Ascending aorta (tissue), 2 donors: ENCODE measurements at regions of chr19 and their contacts with region 1.

Region 1: DNA sequence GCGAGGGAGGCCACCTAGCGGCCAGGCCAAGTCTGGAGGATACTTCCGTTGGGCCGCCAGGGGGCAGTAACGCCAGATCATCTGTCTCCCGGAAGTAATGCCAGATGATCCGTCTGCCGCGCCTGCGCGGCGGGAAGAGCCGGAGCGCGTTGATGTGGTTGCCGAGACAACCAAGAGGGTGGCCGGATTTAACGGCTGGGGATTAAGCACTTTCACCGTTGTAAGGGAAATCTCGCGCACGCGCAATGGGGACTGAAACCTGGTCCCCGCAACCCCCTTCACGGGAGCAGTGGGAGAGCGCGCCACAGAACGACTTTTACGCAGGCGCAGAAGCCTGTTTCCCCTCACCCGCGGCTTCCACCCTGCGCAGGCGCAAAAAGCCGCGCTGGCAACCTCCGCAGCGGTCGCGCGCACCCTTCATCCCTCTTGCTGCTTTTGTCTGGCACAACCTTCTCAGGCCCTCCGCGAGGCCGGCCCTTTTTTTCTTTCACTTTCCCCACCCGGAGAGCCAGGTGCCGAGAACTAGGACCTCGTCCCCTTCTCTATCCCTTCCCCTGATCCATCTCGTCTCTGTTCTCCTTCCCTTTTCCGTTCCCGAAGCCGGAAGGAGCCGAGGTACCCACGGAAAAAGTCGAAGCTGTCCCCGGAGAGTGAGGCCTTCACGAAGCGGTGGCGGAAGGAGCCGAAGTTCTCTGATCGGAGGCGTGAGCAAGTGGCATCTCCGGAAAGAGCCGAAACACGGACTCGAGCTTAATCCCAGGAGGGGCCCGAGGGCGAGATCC is 886 bp upstream of the U2AF2 start:
- DNase-seq: peak; percentile 98 to 100
- H3K4me3 ChIP-seq: peak overlapping the region; percentile 77 to 89
- H3K27ac ChIP-seq: peak overlapping the region; percentile 97
- H3K4me1 ChIP-seq: peaks cover 20 to 36% of the 10 kb centered on the region in 2 donors
- H3K27me3 ChIP-seq: no peaks in the 10 kb centered on the region
- CTCF ChIP-seq: peak; percentile 94 to 100 (median 96)

Region 2: DNA sequence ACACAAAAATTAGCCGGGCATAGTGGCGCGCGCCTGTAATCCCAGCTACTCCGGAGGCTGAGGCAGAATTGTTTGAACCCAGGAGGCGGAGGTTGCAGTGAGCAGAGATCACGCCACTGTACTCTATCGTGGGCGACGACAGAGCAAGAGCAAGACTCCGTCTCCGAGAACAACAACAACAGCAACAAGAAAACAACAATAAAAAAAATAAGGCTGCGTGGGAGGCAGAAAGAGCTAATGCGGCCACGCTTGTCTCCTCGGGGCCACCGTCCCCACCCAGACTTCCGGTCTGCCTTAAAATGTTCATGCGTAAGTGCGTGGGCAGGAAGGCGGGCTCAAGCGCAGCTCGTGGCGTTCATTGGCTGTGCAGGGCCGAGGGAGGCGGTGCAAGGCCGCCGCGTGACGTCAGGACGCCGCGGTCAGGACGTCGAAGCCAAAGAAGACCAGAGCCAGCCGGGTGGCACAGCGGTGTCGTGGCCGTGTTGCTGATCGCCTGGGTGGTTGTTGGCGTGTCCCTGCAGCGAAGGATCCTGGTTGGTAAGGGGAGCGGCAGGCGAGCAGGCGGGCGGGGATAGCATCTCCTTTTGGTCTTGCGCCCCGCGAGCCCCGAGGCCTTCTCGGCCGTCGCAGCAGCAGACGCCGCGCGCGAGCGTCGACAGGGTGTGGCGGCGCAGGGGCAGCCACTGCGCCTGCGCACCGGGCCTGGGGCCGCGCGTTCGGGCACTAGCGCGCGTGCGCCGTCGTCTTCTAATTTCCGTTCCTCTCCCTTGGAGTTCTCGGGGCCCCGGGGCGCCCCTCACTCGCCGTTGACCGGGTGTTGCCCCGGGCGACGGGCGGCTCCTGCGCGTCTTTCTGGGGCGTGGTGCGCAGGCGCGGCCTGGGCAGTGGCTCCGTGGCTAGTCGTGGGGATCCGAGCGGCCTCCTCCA is 1204.9 kb before region 1 on chr19 and contains the start of gene LENG8:
- intact Hi-C with region 1: loop called (anchors 5 kb)
- DNase-seq: peak; percentile 92 to 99
- H3K4me3 ChIP-seq: peak within 1 kb of the TSS; percentile 83 to 97
- H3K27ac ChIP-seq: peak within 1 kb of the TSS; percentile 86 to 97
- H3K4me1 ChIP-seq: peaks cover 11 to 39% of the 10 kb centered on the region in 2 donors
- H3K27me3 ChIP-seq: no peaks in the 10 kb centered on the region
- CTCF ChIP-seq: no peak
- total RNA-seq, gene LENG8: 402 TPM

Region 3: DNA sequence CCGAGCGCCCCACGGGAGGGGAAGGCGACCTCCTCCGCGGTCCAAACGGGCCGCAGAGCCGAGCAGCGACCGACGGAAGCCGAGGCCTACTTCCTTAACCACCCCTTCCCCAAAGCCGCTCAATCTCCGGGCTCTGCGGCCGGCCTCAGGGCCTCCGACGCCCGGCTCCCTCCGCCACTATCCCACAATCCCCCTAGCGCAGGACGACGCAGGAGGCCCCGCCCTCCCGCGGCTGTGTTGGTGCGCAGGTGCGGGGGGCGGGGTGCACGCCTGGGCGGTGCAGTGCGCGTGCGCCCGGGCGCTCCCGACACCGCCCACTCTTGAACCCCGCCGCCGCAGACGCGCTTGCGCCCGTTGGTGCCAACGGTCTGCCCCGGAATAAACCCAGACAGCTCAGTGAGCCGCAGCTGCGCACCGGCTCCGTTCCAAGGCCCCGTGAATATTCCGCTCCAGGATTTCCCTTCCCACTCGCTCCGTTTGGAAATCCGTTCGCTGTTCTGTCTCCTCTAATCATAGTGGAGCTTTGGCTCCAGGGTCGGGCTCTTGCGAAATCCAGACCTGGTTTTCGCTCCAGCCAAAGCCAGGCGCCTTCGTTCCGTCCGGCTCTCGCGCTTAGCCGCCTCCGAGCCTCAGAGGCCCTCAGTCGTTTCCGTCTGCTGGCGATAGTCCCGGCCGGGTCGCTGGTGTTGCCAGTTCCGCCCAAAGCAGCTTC is 395.0 kb before region 1 on chr19 and contains the start of gene PPP6R1:
- intact Hi-C with region 1: loop called (anchors 1 kb)
- DNase-seq: peak; percentile 92 to 99
- H3K4me3 ChIP-seq: peak within 1 kb of the TSS; percentile 85 to 87
- H3K27ac ChIP-seq: peak within 1 kb of the TSS; percentile 84 to 88
- H3K4me1 ChIP-seq: peaks cover 8 to 24% of the 10 kb centered on the region in 2 donors
- H3K27me3 ChIP-seq: no peaks in the 10 kb centered on the region
- CTCF ChIP-seq: peak in 1 of 3 experiments; percentile 15
- total RNA-seq, gene PPP6R1: 68.3 TPM

Region 4: GRCh38 chr19:55580628-55581144 is 73.3 kb before region 1 on chr19 and contains the start of gene ZNF579:
- intact Hi-C with region 1: no loop called
- DNase-seq: peak; percentile 32 to 89
- H3K4me3 ChIP-seq: peak within 1 kb of the TSS; percentile 67 to 85
- H3K27ac ChIP-seq: peak within 1 kb of the TSS; percentile 89 to 92
- H3K4me1 ChIP-seq: peaks cover 2 to 8% of the 10 kb centered on the region in 2 donors
- H3K27me3 ChIP-seq: no peaks in the 10 kb centered on the region
- CTCF ChIP-seq: no peak
- total RNA-seq, gene ZNF579: 14.2 TPM

Region 5: GRCh38 chr19:55624109-55625003 is 29.6 kb before region 1 on chr19 and contains the start of gene ZNF784:
- intact Hi-C with region 1: loop called (anchors 2 kb)
- DNase-seq: peak; percentile 67 to 95
- H3K4me3 ChIP-seq: peak within 1 kb of the TSS; percentile 60 to 73
- H3K27ac ChIP-seq: peak within 1 kb of the TSS; percentile 96 to 97
- H3K4me1 ChIP-seq: peaks cover 0 to 5% of the 10 kb centered on the region in 2 donors
- H3K27me3 ChIP-seq: no peaks in the 10 kb centered on the region
- CTCF ChIP-seq: no peak
- total RNA-seq, gene ZNF784: 14.7 TPM

Region 6: GRCh38 chr19:55632463-55632834 is 21.5 kb before region 1 on chr19:
- intact Hi-C with region 1: loop called (anchors 1 kb)
- DNase-seq: peak; percentile 59 to 98
- H3K4me3 ChIP-seq: no peak overlapping the region
- H3K27ac ChIP-seq: peak overlapping the region in 1 of 2 donors; percentile 44
- H3K4me1 ChIP-seq: peaks cover 11 to 19% of the 10 kb centered on the region in 2 donors
- H3K27me3 ChIP-seq: no peaks in the 10 kb centered on the region
- CTCF ChIP-seq: peak; percentile 82 to 90 (median 83)

Region 7: GRCh38 chr19:55674841-55675660 is 21.1 kb after region 1 on chr19 and contains the start of gene EPN1:
- intact Hi-C with region 1: loop called (anchors 2 kb)
- DNase-seq: peak; percentile 77 to 97
- H3K4me3 ChIP-seq: peak within 1 kb of the TSS; percentile 97 to 99
- H3K27ac ChIP-seq: peak within 1 kb of the TSS; percentile 84 to 92
- H3K4me1 ChIP-seq: peaks cover 6 to 27% of the 10 kb centered on the region in 2 donors
- H3K27me3 ChIP-seq: no peaks in the 10 kb centered on the region
- CTCF ChIP-seq: no peak
- total RNA-seq, gene EPN1: 122 TPM